ENCODE measurements at regions of chr5 and their contacts with region 1.

Region 1: GRCh38 chr5:34838785-34839714 is at the start of gene TTC23L:
- DNase-seq: peak; percentile 92 to 94
- ATAC-seq: peak; percentile 98
- total RNA-seq, gene TTC23L: 0.12 TPM in 1 of 2 donors, not detected in the other

Region 2: DNA sequence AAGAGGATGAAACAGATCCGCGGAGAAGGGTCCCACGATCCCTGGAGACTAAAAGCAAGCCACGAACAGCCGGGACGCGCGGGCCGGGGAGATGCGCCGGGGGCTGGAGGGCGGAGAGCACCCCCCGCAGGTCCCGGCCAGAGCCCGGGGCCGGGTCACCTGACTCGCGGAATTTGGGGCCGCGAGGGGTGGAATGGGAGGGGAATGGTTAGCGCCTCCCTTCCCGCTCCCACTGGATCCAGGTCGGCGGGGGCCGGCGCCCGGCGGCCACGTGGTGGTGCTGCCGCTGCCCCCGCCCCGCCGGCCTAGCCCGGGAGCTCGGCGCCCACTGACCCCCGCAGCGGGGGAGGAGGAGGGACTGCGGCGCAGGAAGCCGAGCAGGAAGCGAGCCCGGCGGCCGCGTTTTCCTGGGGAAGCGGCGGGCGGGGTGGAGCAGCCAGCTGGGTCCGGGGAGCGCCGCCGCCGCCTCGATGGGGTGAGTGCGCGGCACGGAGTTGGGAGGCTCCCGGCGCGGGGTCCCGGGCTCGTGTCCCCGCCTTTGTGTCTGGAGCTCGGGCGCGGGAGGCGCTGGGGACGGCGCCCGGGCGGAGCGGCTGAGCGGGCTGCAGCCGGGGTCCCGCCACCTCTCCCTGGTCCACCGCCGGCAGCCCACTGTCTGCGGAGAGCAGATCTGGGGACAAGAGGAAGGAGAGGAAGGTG is 182.9 kb before region 1 on chr5 and contains the start of gene RAI14:
- intact Hi-C with region 1: loop called in 1 of 2 experiments (anchors 5 kb)
- DNase-seq: peak; percentile 74 to 78
- ATAC-seq: peak; percentile 84
- total RNA-seq, gene RAI14: 11.3 to 32.2 TPM

Measured in left colon (tissue), 2 donors.